ENCODE measurements at regions of chr2 and their contacts with region 1.

Region 1: GRCh38 chr2:37982147-37982582 is 57.1 kb downstream of the RMDN2 start:
- DNase-seq: peak; percentile 61
- ATAC-seq: peak; percentile 72

Region 2: DNA sequence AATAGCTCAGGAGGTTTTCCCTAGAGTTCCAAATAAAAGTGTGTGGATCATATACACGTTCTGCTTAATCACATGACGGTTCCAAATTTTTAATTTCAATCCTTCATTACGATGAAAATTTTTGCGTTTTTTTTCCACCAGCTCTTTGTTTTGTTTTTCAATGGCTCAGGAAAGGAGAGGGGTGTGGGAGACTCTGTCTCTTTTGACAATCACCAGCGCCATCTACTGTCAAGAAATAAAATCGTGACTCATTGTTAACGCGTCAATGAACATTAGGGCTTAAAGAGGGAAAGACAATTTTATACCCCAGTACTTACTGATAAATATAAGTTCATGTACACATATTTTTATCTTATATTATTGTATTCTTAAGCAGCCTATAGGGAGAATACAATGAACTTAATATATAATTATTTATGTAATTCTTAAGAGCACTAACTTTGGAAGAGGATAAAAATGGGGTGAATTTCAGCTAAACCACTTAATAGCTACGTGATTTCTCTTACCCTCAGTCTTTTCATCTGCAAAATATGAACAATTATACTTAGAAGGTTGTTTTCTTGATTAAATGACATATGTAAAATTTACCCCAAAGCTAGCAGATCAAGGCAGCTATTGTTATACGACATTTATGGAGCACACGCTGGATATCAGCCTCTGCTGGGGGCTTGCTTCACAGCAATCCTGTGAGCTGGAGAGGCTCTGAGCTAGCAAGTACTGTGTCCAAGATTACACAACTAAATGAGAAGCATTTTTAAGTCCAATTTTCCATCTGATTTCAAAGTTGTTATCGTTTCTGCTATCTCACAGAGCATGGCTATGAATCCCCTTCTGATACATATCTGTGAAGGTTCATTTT is 104.5 kb before region 1 on chr2:
- intact Hi-C with region 1: no loop called
- DNase-seq: no peak
- ATAC-seq: peak; percentile 78

Region 3: DNA sequence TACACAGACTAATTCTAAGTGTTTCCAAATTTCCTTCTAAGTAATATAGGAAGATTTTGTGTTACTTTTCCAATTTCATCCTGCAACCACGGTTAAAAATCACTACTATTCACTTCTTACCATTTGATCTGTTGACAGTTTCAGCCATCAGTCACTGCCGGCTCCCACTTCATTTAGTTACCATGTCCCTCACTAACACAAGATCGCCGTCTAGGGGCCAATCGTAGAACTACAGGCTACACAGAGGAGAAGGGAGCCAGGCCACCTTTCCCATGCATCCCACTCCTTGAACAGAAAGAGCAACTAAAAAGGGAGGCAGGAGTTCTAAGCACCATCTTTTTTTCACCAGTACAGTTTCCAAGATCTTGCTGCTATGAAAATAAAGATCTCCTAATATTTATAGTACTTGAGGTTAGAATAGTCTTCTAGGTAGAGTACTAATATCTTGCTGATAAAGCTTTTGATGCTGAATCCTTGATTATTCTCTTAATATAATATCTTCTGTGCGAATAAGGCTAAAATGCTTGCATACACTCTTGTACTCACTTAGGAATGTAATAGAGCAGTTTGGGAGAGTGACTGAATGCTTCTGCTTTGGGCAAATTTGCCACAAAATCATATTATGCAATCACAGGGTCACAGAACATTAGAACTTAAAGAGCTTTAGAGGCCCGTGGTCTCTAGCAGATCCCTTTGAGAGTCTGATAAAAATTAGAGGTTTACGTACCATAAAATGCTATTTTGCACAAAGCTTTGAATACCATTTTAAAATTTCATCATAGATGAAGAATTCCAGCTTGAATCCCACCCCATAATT is 133.3 kb after region 1 on chr2:
- intact Hi-C with region 1: loop called (anchors 5 kb)
- DNase-seq: peak; percentile 86
- ATAC-seq: peak; percentile 83

Region 4: DNA sequence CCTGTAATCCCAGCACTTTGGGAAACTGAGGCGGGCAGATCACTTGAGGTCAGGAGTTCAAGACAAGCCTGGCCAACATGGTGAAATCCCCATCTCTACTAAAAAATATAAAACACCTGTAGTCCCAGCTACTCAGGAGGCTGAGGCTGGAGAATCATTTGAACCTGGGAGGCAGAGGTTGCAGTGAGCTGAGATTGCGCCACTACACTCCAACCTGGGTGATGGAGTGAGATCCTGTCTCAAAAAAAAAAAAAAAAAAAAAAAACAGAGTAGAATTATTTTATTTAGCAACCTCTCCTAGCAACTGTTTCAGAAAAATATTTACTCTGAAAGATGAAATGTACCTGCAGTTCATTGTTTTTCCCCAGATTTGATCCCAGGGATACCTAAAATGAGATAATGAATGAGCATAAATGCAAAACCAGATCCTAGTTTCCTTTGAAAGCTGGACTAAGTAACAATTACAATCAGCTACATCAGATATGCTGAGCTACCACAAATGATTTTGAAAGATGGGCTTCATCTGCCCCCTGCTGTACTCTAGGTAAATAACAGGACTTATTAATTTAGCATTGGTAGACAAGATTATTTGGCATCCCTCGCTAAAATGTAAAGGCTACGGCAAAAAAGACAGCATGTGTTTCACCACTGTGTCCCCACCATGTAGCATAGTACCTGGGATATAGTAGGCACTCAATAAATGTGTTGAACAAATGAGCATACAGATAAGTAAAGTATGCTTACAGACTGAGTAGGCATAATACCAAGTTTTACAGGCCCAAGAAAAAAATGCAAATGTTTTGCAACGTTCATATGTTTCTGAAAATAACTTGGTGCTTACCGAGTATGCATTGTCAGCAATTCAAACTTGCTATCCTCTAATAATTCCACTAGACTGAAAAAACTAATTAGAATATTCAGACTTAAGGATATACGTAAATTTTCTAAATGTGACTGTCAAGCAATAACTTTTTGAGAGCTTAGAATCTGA is 292.4 kb after region 1 on chr2:
- intact Hi-C with region 1: loop called (anchors 5 kb)
- DNase-seq: no peak
- ATAC-seq: peak; percentile 77